CD4-positive, alpha-beta memory T cell (primary cell): ENCODE measurements at regions of chr1 and their contacts with region 1.

Region 1: DNA sequence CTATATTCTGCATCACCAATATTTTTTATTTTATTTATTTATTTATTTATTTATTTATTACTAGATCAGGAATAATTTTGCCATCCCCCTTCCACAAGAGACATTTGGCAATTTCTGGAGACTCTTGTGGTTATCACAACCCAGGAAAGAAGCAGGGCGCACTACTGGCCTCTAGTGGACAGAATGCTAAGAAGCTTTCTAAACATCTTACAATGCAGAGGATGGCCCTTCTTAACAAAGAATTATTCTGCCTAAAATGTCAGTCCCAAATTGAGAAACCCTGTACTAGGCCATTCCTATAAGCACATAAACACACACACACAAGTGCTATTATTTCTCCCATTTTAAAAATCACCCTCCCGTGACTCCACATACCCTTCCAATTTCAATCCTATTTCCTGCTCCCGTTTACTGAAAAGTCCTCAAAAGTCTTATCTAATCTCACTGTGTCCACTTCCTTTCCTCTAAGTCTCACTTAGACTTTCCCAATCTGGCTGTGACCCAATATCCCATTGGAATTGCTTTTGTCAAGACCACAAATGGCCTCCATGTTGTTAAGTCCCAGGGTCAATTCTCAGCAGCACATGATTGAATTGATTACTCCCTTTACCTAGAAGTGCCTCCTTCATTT is 43.7 kb upstream of the RNF11 start:
- DNase-seq: peak in 4 of 5 donors; percentile 22 to 31 (median 29)
- H3K4me3 ChIP-seq: no peak overlapping the region
- H3K4me3 Mint-ChIP-seq: no peak overlapping the region
- H3K27ac ChIP-seq: no peak overlapping the region
- H3K27ac Mint-ChIP-seq: no peak overlapping the region
- H3K4me1 ChIP-seq: no peaks in the 10 kb centered on the region
- H3K4me1 Mint-ChIP-seq: no peaks in the 10 kb centered on the region
- H3K27me3 ChIP-seq: no peaks in the 10 kb centered on the region
- H3K27me3 Mint-ChIP-seq: peaks cover 3% of the 10 kb centered on the region in 2 donors

Region 2: GRCh38 chr1:50929376-50929958 is 262.9 kb before region 1 on chr1:
- CTCF ChIA-PET with region 1: interaction called, 65 read pairs
- POLR2A ChIA-PET with region 1: no interaction called
- intact Hi-C with region 1: no loop called
- DNase-seq: peak in 4 of 5 donors; percentile 22 to 36 (median 28)
- H3K4me3 ChIP-seq: no peak overlapping the region
- H3K4me3 Mint-ChIP-seq: no peak overlapping the region
- H3K27ac ChIP-seq: no peak overlapping the region
- H3K27ac Mint-ChIP-seq: no peak overlapping the region
- H3K4me1 ChIP-seq: no peaks in the 10 kb centered on the region
- H3K4me1 Mint-ChIP-seq: peaks cover 19 to 31% (median 26%) of the 10 kb centered on the region in 4 donors
- H3K27me3 ChIP-seq: no peaks in the 10 kb centered on the region
- H3K27me3 Mint-ChIP-seq: no peaks in the 10 kb centered on the region

Region 3: GRCh38 chr1:51175278-51175677 is 17.1 kb before region 1 on chr1:
- CTCF ChIA-PET with region 1: interaction called, 11 read pairs
- POLR2A ChIA-PET with region 1: no interaction called
- intact Hi-C with region 1: no loop called
- DNase-seq: no peak
- H3K4me3 ChIP-seq: no peak overlapping the region
- H3K4me3 Mint-ChIP-seq: peak overlapping the region in 1 of 8 donors; percentile 52
- H3K27ac ChIP-seq: no peak overlapping the region
- H3K27ac Mint-ChIP-seq: no peak overlapping the region
- H3K4me1 ChIP-seq: no peaks in the 10 kb centered on the region
- H3K4me1 Mint-ChIP-seq: peaks cover 0 to 7% (median 5%) of the 10 kb centered on the region in 4 donors
- H3K27me3 ChIP-seq: no peaks in the 10 kb centered on the region
- H3K27me3 Mint-ChIP-seq: peaks cover 19 to 26% of the 10 kb centered on the region in 2 donors

Region 4: DNA sequence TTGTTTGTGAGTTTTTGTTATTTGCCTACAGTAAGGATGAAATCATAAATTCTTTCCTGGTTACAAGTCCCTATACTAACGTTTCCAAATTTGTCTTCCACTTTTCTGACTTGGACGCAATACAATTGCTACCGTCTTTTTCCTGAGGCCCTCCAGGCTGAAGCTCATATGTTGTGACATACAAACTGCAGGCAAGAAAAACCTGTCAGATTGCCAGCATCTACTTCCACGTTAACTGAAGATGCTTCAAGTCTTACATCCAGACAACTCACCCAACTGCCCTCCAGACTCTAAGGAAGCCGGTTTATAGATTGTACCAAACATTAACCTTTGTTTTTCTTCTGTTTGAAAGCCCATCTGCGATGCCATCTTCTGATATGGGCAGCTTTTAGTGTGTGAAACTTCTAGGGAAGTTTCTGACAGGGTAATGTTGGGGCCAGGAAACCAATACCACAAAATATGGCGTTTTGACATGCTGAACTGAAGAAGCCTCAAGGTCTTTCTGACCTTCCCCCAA is 22.3 kb after region 1 on chr1:
- CTCF ChIA-PET with region 1: interaction called, 59 read pairs
- POLR2A ChIA-PET with region 1: no interaction called
- intact Hi-C with region 1: no loop called
- DNase-seq: peak in 2 of 5 donors; percentile 5 to 8
- H3K4me3 ChIP-seq: no peak overlapping the region
- H3K4me3 Mint-ChIP-seq: peak overlapping the region in 6 of 8 donors; percentile 19 to 40 (median 21)
- H3K27ac ChIP-seq: no peak overlapping the region
- H3K27ac Mint-ChIP-seq: peak overlapping the region; percentile 3 to 67 (median 30)
- H3K4me1 ChIP-seq: peaks cover 11% of the 10 kb centered on the region
- H3K4me1 Mint-ChIP-seq: peaks cover 15 to 23% (median 17%) of the 10 kb centered on the region in 4 donors
- H3K27me3 ChIP-seq: no peaks in the 10 kb centered on the region
- H3K27me3 Mint-ChIP-seq: no peaks in the 10 kb centered on the region

Region 5: GRCh38 chr1:51296383-51297357 is 104.3 kb after region 1 on chr1:
- CTCF ChIA-PET with region 1: interaction called, 16 read pairs
- POLR2A ChIA-PET with region 1: no interaction called
- intact Hi-C with region 1: loop called (anchors 5 kb)
- DNase-seq: peak; percentile 45 to 60 (median 53)
- H3K4me3 ChIP-seq: peak overlapping the region; percentile 36 to 52
- H3K4me3 Mint-ChIP-seq: peak overlapping the region; percentile 58 to 84 (median 76)
- H3K27ac ChIP-seq: no peak overlapping the region
- H3K27ac Mint-ChIP-seq: peak overlapping the region in 2 of 7 donors; percentile 13 to 52
- H3K4me1 ChIP-seq: peaks cover 12% of the 10 kb centered on the region
- H3K4me1 Mint-ChIP-seq: peaks cover 4 to 30% (median 12%) of the 10 kb centered on the region in 4 donors
- H3K27me3 ChIP-seq: no peaks in the 10 kb centered on the region
- H3K27me3 Mint-ChIP-seq: no peaks in the 10 kb centered on the region